Left colon (tissue), 2 donors: ENCODE measurements at regions of chr5 and their contacts with region 1.

Region 1: DNA sequence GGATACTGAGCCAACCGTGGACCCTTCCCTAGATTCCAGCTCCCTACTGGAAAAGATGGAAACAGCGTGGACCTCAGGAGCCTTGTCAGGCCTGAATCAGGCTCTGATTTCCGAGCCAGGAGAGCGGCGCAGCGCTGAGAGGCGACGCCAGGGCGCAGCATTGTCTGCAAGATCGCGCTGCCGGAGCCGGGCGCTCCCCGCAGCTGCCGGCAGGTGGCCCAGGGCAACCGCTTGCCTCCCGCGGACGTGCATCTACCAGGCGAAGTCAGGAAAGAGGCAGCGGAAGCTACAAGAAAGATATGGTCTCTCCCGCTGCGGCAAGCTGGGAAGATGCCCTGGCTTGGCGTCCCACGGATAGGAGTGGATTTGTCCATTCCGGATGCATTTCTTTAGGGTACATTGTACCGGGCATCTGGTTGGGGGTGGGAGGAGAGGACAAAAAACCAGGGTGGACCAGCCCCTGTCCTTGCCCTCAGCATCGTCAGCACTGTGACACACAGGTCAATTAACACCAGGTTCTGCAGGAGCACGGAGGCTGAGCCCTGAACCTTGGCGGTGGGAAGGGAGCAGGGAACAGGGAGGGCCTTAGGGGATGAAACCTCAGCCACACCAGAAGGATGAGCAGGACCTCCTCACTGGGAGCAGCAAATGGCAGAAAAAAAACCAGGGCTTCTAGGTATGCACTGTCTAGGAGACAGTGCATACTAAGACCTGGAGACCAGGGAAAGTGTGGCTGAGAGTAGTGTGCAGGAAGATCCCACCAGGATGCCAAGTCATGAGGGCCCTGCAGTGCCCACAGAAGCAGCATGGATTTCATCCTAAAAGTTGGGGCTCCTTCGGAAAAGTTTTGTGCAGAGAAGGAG is 55.9 kb downstream of the SFXN1 start:
- DNase-seq: peak; percentile 38 to 81
- ATAC-seq: peak; percentile 99

Region 2: GRCh38 chr5:175718401-175719108 is 184.3 kb after region 1 on chr5:
- intact Hi-C with region 1: loop called in 1 of 2 experiments (anchors 10 kb)
- DNase-seq: peak in 1 of 2 donors; percentile 71
- ATAC-seq: peak; percentile 46